ENCODE measurements at regions of chr1 and their contacts with region 1.

Region 1: GRCh38 chr1:147599362-147600118 is 58.2 kb downstream of the BCL9 start:
- DNase-seq: peak; percentile 80 to 97
- H3K4me3 ChIP-seq: peak overlapping the region; percentile 65
- H3K27ac ChIP-seq: no peak overlapping the region
- H3K4me1 ChIP-seq: peaks cover 15% of the 10 kb centered on the region
- H3K27me3 ChIP-seq: no peaks in the 10 kb centered on the region
- CTCF ChIP-seq: no peak

Region 2: DNA sequence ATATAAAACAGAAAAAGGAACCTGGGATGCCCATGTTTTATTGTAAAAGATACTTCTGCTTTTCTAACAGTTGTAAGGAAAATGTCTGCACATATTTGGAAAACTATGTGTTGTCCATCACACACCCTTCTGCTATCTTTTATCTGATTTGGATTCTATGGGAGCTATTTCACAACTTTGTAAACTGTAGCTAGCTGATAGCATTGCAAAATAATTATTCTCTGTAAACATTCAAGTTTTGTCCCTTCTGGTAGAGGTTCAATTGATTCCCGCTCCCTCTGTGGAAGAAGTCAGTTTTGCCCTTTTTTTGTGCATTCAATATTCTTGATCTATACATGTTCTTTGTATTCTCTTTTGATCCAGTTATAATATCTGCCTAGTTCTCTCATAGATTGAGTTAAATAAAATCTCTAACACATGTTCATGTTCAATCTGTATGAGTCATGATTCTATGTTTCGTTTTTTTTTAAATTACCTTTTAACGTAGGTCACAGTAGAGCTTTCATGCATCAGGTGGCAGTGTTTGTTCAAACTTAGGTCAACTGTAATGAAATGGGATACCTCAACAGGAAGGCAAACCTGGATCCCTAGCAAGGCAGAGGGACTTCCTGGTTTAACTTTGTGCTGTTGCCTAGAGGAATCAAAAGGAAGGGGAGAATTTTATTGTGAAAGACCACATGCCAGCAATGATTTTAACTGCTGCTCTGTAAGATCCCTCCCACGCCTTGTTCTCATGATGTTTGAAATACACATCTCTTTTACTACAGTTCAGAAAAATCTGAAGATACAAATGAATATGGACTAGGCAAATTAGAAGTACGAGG is 84.3 kb before region 1 on chr1:
- CTCF ChIA-PET with region 1: no interaction called
- POLR2A ChIA-PET with region 1: no interaction called
- intact Hi-C with region 1: loop called (anchors 1 kb)
- DNase-seq: peak; percentile 48 to 99
- H3K4me3 ChIP-seq: peak overlapping the region; percentile 39
- H3K27ac ChIP-seq: peak overlapping the region; percentile 73
- H3K4me1 ChIP-seq: peaks cover 39% of the 10 kb centered on the region
- H3K27me3 ChIP-seq: no peaks in the 10 kb centered on the region
- CTCF ChIP-seq: peak; percentile 64

Region 3: GRCh38 chr1:147545133-147545532 is 54.4 kb before region 1 on chr1:
- CTCF ChIA-PET with region 1: interaction called, 3 read pairs
- POLR2A ChIA-PET with region 1: interaction called, 35 read pairs
- intact Hi-C with region 1: loop called (anchors 1 kb)
- DNase-seq: peak; percentile 83 to 96
- H3K4me3 ChIP-seq: no peak overlapping the region
- H3K27ac ChIP-seq: peak overlapping the region; percentile 56
- H3K4me1 ChIP-seq: peaks cover 44% of the 10 kb centered on the region
- H3K27me3 ChIP-seq: no peaks in the 10 kb centered on the region
- CTCF ChIP-seq: no peak

Region 4: DNA sequence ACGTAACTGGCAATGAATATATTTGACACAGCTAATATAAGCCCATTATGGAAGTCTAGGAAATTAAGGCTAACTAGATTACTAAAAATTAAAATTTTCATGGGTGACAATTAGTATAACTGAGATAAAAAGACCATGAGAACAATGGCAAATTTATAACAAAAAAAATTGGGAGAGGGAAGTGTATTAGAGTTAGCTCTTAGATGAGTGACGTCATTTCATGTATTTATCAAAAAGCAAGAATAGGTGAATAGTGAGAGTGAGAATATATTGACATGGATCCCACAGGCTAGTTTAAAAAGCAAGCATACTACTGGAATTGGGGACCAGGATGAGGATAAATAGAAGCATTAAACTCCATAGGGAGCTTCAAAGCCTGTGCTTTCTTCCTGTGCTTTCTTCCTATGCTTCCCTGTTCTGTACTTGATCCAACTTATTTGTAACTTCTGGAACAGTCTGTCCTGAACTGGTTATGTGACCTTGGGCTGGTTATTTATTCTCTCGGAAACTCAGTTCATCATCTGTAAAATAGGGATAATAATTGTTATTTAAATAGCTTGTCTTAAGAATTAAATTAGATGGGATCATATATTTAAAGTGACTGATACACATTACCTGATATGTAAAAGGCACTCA is 49.1 kb before region 1 on chr1:
- CTCF ChIA-PET with region 1: interaction called, 10 read pairs
- POLR2A ChIA-PET with region 1: interaction called, 26 read pairs
- intact Hi-C with region 1: no loop called
- DNase-seq: no peak
- H3K4me3 ChIP-seq: no peak overlapping the region
- H3K27ac ChIP-seq: no peak overlapping the region
- H3K4me1 ChIP-seq: peaks cover 4% of the 10 kb centered on the region
- H3K27me3 ChIP-seq: no peaks in the 10 kb centered on the region
- CTCF ChIP-seq: no peak

Region 5: DNA sequence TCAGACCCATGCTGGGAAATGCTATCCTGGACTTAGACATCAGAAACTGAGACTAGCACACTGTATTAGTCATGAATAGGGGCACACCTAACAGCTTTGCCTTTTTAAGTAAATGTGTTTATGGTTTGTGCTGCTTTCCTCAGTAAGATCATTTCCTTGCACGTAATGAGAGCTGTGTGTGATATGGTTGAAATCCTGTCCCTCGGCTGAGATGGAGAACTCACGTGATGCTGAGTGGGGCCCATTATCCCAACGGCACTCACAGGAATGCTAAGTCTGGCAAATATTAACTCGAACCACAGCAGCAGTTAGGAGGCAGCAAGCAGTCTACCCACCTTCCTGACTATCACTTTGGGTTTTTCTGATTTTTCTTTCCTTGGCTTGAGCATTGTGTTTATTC is 20.0 kb before region 1 on chr1:
- CTCF ChIA-PET with region 1: no interaction called
- POLR2A ChIA-PET with region 1: no interaction called
- intact Hi-C with region 1: no loop called
- DNase-seq: no peak
- H3K4me3 ChIP-seq: no peak overlapping the region
- H3K27ac ChIP-seq: no peak overlapping the region
- H3K4me1 ChIP-seq: no peaks in the 10 kb centered on the region
- H3K27me3 ChIP-seq: no peaks in the 10 kb centered on the region
- CTCF ChIP-seq: no peak